ENCODE measurements at regions of chr1 and their contacts with region 1.

Region 1: GRCh38 chr1:101238681-101239094 is 1.9 kb downstream of the S1PR1 start:
- DNase-seq: peak; percentile 83 to 88
- ATAC-seq: peak; percentile 71 to 75 (median 74)
- H3K4me3 ChIP-seq: peak overlapping the region; percentile 79
- H3K27ac ChIP-seq: peak overlapping the region; percentile 46
- H3K4me1 ChIP-seq: peaks cover 6% of the 10 kb centered on the region
- H3K27me3 ChIP-seq: peaks cover 0 to 45% (median 4%) of the 10 kb centered on the region in 3 donors
- CTCF ChIP-seq: peak; percentile 85

Region 2: DNA sequence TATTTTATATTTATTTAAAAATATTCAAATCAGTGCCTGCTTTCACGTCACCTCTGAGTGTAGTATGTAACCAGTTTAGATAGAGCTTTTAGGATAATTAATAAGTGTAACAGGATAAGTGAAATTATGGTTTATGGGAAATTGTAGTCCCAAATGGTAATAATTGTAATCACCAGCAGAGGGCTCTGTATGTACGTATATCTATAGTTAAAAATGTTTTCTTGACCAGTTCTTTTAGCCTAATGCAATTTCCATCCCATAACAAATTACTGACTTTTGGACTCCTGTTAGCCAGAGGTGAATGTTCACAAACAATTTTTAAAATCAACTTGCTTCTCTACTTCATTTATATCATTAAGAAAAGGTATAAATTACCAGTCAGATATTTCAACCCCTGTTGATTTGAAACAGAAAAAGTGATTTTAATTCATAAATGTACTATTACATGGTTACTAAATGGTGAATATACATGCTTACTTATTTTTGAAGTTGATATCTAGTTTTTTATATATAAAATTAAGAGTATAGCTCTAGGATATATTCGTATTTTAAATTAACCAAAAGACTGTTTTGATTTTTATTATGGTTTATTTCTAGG is 317.5 kb before region 1 on chr1:
- intact Hi-C with region 1: loop called (anchors 5 kb)
- DNase-seq: no peak
- ATAC-seq: peak in 2 of 4 donors; percentile 54 to 61
- H3K4me3 ChIP-seq: no peak overlapping the region
- H3K27ac ChIP-seq: no peak overlapping the region
- H3K4me1 ChIP-seq: no peaks in the 10 kb centered on the region
- H3K27me3 ChIP-seq: no peaks in the 10 kb centered on the region
- CTCF ChIP-seq: peak; percentile 79

Region 3: GRCh38 chr1:101025657-101026504 is 212.8 kb before region 1 on chr1 and contains the start of gene DPH5:
- intact Hi-C with region 1: loop called (anchors 2 to 10 kb)
- DNase-seq: peak; percentile 94 to 96
- ATAC-seq: peak; percentile 95 to 98 (median 96)
- H3K4me3 ChIP-seq: peak within 1 kb of the TSS; percentile 80
- H3K27ac ChIP-seq: peak within 1 kb of the TSS; percentile 96
- H3K4me1 ChIP-seq: peaks cover 25% of the 10 kb centered on the region
- H3K27me3 ChIP-seq: no peaks in the 10 kb centered on the region
- CTCF ChIP-seq: no peak
- total RNA-seq, gene DPH5: 18.6 to 32.2 (median 29.7) TPM

Region 4: DNA sequence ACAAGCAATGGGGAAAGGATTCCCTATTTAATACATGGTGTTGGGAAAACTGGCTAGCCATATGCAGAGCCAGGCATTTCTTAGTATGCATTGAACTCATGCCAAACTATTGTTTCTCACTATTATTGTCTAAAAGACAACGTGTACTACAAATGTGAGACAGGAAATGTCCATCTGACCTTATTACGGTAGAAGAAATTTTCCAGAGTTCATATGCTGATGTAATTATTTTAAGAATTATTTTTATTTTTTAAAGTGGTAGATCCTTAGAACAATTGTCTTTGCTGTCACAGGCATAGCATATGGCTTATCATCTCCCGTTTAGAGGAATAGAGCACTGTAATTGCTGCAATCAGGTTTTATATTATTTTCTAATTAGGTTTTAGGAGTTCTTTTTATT is 77.1 kb before region 1 on chr1:
- intact Hi-C with region 1: loop called in 1 of 2 experiments (anchors 2 kb)
- DNase-seq: no peak
- ATAC-seq: no peak
- H3K4me3 ChIP-seq: no peak overlapping the region
- H3K27ac ChIP-seq: peak overlapping the region; percentile 47
- H3K4me1 ChIP-seq: no peaks in the 10 kb centered on the region
- H3K27me3 ChIP-seq: no peaks in the 10 kb centered on the region
- CTCF ChIP-seq: no peak

Measured in psoas muscle (tissue), 8 donors.